CD14-positive monocyte (primary cell): ENCODE measurements at regions of chr19 and their contacts with region 1.

Region 1: GRCh38 chr19:38544034-38544958 is 73.5 kb downstream of the MAP4K1 start:
- DNase-seq: peak; percentile 72 to 78 (median 76)
- H3K4me3 ChIP-seq: peak overlapping the region; percentile 8 to 66 (median 18)
- H3K4me3 Mint-ChIP-seq: peak overlapping the region; percentile 42 to 80
- H3K27ac ChIP-seq: peak overlapping the region in 1 of 2 donors; percentile 62
- H3K27ac Mint-ChIP-seq: peak overlapping the region in 6 of 7 donors; percentile 46 to 90 (median 74)
- H3K4me1 ChIP-seq: peaks cover 30 to 40% of the 10 kb centered on the region in 2 donors
- H3K4me1 Mint-ChIP-seq: peaks cover 25% of the 10 kb centered on the region
- H3K27me3 ChIP-seq: no peaks in the 10 kb centered on the region
- H3K27me3 Mint-ChIP-seq: peaks cover 0 to 10% (median 8%) of the 10 kb centered on the region in 3 donors
- CTCF ChIP-seq: peak; percentile 69

Region 2: GRCh38 chr19:38634757-38635482 is 90.6 kb after region 1 on chr19:
- intact Hi-C with region 1: loop called (anchors 5 to 10 kb)
- DNase-seq: peak; percentile 64 to 72 (median 71)
- H3K4me3 ChIP-seq: no peak overlapping the region
- H3K4me3 Mint-ChIP-seq: peak overlapping the region in 1 of 2 donors; percentile 48
- H3K27ac ChIP-seq: peak overlapping the region; percentile 17 to 25
- H3K27ac Mint-ChIP-seq: peak overlapping the region; percentile 45 to 92 (median 78)
- H3K4me1 ChIP-seq: peaks cover 10 to 17% of the 10 kb centered on the region in 2 donors
- H3K4me1 Mint-ChIP-seq: peaks cover 21% of the 10 kb centered on the region
- H3K27me3 ChIP-seq: no peaks in the 10 kb centered on the region
- H3K27me3 Mint-ChIP-seq: peaks cover 0 to 1% (median 0%) of the 10 kb centered on the region in 3 donors
- CTCF ChIP-seq: peak; percentile 85